ENCODE measurements at regions of chr6 and their contacts with region 1.

Region 1: DNA sequence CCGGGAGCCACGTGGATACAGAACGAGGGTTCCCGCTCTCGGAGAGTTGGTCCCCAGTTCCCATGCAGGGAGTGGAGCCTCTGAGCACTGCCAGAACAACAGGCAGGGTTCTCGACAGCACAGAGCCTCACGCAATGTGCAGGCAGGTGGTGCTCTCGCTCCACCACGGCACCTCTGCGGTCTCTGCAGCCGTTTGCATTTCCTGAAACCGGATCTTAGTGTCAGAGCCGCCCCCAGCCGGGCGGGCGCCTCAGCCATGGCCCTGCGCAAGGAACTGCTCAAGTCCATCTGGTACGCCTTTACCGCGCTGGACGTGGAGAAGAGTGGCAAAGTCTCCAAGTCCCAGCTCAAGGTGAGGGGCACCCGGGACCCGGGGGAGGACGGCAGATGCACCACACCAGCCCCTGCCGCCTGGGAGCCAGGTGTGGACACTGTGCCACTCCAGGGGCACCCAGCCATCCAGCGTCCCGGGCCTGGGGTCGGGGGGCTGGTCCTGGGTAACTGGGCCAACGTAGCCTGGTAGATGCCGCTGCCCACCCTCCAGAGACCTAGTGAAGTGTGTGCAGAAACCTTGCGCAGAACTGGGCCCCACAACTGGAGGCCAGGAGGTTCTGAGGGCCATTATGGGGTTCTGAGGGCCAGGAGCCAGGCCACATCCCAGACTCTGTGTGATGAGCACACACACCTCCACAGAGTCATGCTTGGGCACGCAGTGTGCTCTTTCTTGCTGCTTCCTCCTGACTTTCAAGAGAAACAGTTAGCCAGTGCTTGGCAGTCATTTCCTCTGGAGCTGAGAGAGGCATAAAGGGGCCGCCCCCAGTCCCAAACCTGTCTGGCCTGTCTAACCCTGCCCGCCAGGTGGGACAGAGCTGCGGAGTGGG is at the start of gene DEF6:
- DNase-seq: peak; percentile 88
- ATAC-seq: peak; percentile 95
- H3K4me3 ChIP-seq: peak within 1 kb of the TSS; percentile 55 to 81 (median 77)
- H3K27ac ChIP-seq: no peak within 1 kb of the TSS
- H3K4me1 ChIP-seq: peaks cover 26% of the 10 kb centered on the region
- H3K27me3 ChIP-seq: no peaks in the 10 kb centered on the region
- CTCF ChIP-seq: peak; percentile 100
- EP300 ChIP-seq: peak; percentile 46 to 56; a peak in 2 of 4 replicates
- POLR2A ChIP-seq: peak; percentile 64 to 74
- RAD21 ChIP-seq: peak; percentile 100
- total RNA-seq, gene DEF6: 9.6 and 10.0 TPM in 2 replicates

Region 2: GRCh38 chr6:35218021-35218420 is 79.8 kb before region 1 on chr6:
- CTCF ChIA-PET with region 1: no interaction called
- POLR2A ChIA-PET with region 1: no interaction called
- in situ Hi-C with region 1: no loop called
- intact Hi-C with region 1: no loop called
- DNase-seq: no peak
- ATAC-seq: no peak
- H3K4me3 ChIP-seq: no peak overlapping the region
- H3K27ac ChIP-seq: no peak overlapping the region
- H3K4me1 ChIP-seq: 0 out of 2 replicates have a peak, but pooled peaks cover 13% of the 10 kb centered on the region
- H3K27me3 ChIP-seq: peaks cover 10 to 51% of the 10 kb centered on the region in 2 experiments; a peak in 4 of 5 replicates
- CTCF ChIP-seq: no peak
- EP300 ChIP-seq: no peak
- POLR2A ChIP-seq: no peak
- RAD21 ChIP-seq: no peak

Region 3: GRCh38 chr6:35327349-35328027 is 29.6 kb after region 1 on chr6:
- CTCF ChIA-PET with region 1: interaction called, 35 read pairs
- POLR2A ChIA-PET with region 1: interaction called, 4 read pairs
- in situ Hi-C with region 1: loop called (anchors 5 kb)
- intact Hi-C with region 1: loop called (anchors 1 kb)
- DNase-seq: peak; percentile 71
- ATAC-seq: peak; percentile 91
- H3K4me3 ChIP-seq: no peak overlapping the region
- H3K27ac ChIP-seq: no peak overlapping the region
- H3K4me1 ChIP-seq: peaks cover 45% of the 10 kb centered on the region
- H3K27me3 ChIP-seq: no peaks in the 10 kb centered on the region
- CTCF ChIP-seq: peak; percentile 89
- EP300 ChIP-seq: no peak
- POLR2A ChIP-seq: no peak
- RAD21 ChIP-seq: peak; percentile 81

Region 4: DNA sequence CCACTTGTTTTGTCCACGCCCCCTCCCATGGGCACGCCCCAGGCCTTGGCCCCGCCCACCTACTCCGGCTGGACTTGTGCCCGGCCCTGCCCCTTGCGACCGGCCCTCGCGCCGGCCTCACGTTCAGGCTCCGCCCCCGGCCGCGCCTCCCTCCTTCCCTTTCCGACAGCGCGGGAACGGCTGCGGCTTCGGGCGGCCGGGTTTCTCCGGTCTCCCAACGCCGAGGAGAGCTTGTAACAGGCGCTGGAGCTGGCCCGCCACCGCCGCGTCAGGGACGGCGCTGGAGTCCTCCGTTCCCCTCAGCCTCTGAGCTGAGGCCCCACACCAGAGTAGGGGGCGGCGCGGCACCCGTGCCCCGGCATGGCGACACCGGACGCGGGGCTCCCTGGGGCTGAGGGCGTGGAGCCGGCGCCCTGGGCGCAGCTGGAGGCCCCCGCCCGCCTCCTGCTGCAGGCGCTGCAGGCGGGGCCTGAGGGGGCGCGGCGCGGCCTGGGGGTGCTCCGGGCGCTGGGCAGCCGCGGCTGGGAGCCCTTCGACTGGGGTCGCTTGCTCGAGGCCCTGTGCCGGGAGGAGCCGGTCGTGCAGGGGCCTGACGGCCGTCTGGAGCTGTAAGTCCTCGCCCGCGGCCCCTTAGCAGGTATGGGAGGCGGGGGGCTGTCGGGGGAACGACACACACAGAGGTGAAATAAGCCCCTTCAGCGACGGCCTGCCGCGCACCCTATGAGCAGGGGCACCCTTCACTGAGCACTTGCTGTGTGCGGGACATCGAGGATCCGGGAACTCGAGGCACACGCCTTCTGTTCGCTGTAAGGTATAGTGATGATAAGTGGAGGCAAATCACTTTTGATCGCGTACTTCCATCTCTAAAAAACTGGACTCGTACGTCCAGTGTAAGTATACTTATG is 154.6 kb after region 1 on chr6 and contains the start of gene FANCE:
- CTCF ChIA-PET with region 1: interaction called, 17 read pairs
- POLR2A ChIA-PET with region 1: interaction called, 5 read pairs
- in situ Hi-C with region 1: no loop called
- intact Hi-C with region 1: loop called (anchors 1 kb)
- DNase-seq: peak; percentile 84
- ATAC-seq: peak; percentile 88
- H3K4me3 ChIP-seq: peak within 1 kb of the TSS; percentile 56 to 79 (median 77)
- H3K27ac ChIP-seq: peak within 1 kb of the TSS; percentile 54
- H3K4me1 ChIP-seq: peaks cover 49% of the 10 kb centered on the region
- H3K27me3 ChIP-seq: peaks cover 3 to 22% of the 10 kb centered on the region in 2 experiments; a peak in 2 of 5 replicates
- CTCF ChIP-seq: peak; percentile 31; the same call in 1 of the 2 replicates
- EP300 ChIP-seq: no peak
- POLR2A ChIP-seq: peak; percentile 31 to 68; a peak in 3 of 4 replicates
- RAD21 ChIP-seq: peak; percentile 62
- total RNA-seq, gene FANCE: 9.7 and 11.2 TPM in 2 replicates

Region 5: GRCh38 chr6:35522660-35523658 is 225.1 kb after region 1 on chr6:
- CTCF ChIA-PET with region 1: interaction called, 4 read pairs
- POLR2A ChIA-PET with region 1: no interaction called
- in situ Hi-C with region 1: no loop called
- intact Hi-C with region 1: loop called (anchors 1 kb)
- DNase-seq: peak; percentile 59
- ATAC-seq: peak; percentile 89
- H3K4me3 ChIP-seq: peak overlapping the region in 2 of 3 experiments; percentile 7 to 55; a peak in 3 of 6 replicates
- H3K27ac ChIP-seq: no peak overlapping the region
- H3K4me1 ChIP-seq: peaks cover 35% of the 10 kb centered on the region
- H3K27me3 ChIP-seq: peaks cover 4 to 27% of the 10 kb centered on the region in 2 experiments; a peak in 2 of 5 replicates
- CTCF ChIP-seq: peak; percentile 97
- EP300 ChIP-seq: no peak
- POLR2A ChIP-seq: no peak
- RAD21 ChIP-seq: peak; percentile 88